Cardiac septum (tissue), 1 donor: ENCODE measurements at regions of chr20 and their contacts with region 1.

Region 1: GRCh38 chr20:571754-572441 is 28.3 kb upstream of the CSNK2A1 start:
- DNase-seq: peak; percentile 84

Region 2: GRCh38 chr20:362271-363254 is 209.3 kb before region 1 on chr20:
- intact Hi-C with region 1: no loop called
- DNase-seq: peak; percentile 94

Region 3: GRCh38 chr20:609371-609964 is 37.6 kb after region 1 on chr20:
- intact Hi-C with region 1: loop called (anchors 5 kb)
- DNase-seq: no peak